ENCODE measurements at regions of chr17 and their contacts with region 1.

Region 1: GRCh38 chr17:1566545-1567199 is 4.1 kb upstream of the PITPNA start:
- DNase-seq: peak; percentile 66
- H3K4me3 Mint-ChIP-seq: peak overlapping the region; percentile 59
- H3K27ac Mint-ChIP-seq: peak overlapping the region; percentile 84
- H3K4me1 Mint-ChIP-seq: peaks cover 24% of the 10 kb centered on the region
- H3K27me3 Mint-ChIP-seq: no peaks in the 10 kb centered on the region

Region 2: GRCh38 chr17:1606352-1607033 is 39.8 kb after region 1 on chr17:
- CTCF ChIA-PET with region 1: no interaction called
- POLR2A ChIA-PET with region 1: no interaction called
- intact Hi-C with region 1: loop called (anchors 1 kb)
- DNase-seq: peak; percentile 60
- H3K4me3 Mint-ChIP-seq: no peak overlapping the region
- H3K27ac Mint-ChIP-seq: peak overlapping the region; percentile 92
- H3K4me1 Mint-ChIP-seq: peaks cover 28% of the 10 kb centered on the region
- H3K27me3 Mint-ChIP-seq: no peaks in the 10 kb centered on the region

Region 3: DNA sequence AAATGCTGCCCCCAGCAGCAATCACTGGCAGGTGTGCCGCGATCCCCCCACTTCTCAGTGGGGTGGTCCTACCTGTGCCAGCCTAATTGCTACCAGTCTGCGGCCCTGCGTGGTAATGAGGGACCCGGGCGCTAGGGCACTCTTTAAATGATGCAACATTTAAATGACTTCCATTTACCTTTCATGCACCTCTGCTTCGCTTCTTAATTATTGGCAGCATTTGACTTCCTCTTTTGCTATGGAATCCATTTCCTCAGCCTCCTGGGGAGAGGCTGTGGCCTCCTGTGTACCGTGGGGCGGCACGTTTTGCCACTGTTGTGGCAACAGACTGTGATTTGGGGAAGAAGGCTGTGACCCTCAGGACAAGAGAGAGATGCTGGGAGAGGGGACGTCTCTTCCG is 349.2 kb after region 1 on chr17:
- CTCF ChIA-PET with region 1: no interaction called
- POLR2A ChIA-PET with region 1: no interaction called
- intact Hi-C with region 1: no loop called
- DNase-seq: no peak
- H3K4me3 Mint-ChIP-seq: no peak overlapping the region
- H3K27ac Mint-ChIP-seq: no peak overlapping the region
- H3K4me1 Mint-ChIP-seq: no peaks in the 10 kb centered on the region
- H3K27me3 Mint-ChIP-seq: peaks cover 14% of the 10 kb centered on the region